Sigmoid colon (tissue), 7 donors: ENCODE measurements at regions of chr11 and their contacts with region 1.

Region 1: GRCh38 chr11:63762654-63763495 is 5.7 kb downstream of the ZFTA start:
- DNase-seq: peak; percentile 85
- H3K4me3 ChIP-seq: peak overlapping the region; percentile 52 to 65 (median 58)
- H3K27ac ChIP-seq: peak overlapping the region; percentile 86 to 94 (median 91)
- H3K4me1 ChIP-seq: peaks cover 0 to 61% (median 55%) of the 10 kb centered on the region in 4 donors
- H3K27me3 ChIP-seq: no peaks in the 10 kb centered on the region
- CTCF ChIP-seq: peak in 1 of 4 experiments; percentile 24
- EP300 ChIP-seq: no peak
- POLR2A ChIP-seq: no peak

Region 2: GRCh38 chr11:61885166-61885778 is 1877.6 kb before region 1 on chr11:
- intact Hi-C with region 1: no loop called
- DNase-seq: no peak
- H3K4me3 ChIP-seq: no peak overlapping the region
- H3K27ac ChIP-seq: no peak overlapping the region
- H3K4me1 ChIP-seq: peaks cover 0 to 32% (median 23%) of the 10 kb centered on the region in 4 donors
- H3K27me3 ChIP-seq: no peaks in the 10 kb centered on the region
- CTCF ChIP-seq: no peak
- EP300 ChIP-seq: no peak
- POLR2A ChIP-seq: no peak

Region 3: GRCh38 chr11:63671322-63672155 is 91.3 kb before region 1 on chr11 and contains the start of gene ATL3:
- intact Hi-C with region 1: loop called (anchors 5 kb)
- DNase-seq: peak; percentile 99
- H3K4me3 ChIP-seq: peak within 1 kb of the TSS; percentile 66 to 81 (median 74)
- H3K27ac ChIP-seq: peak within 1 kb of the TSS; percentile 96 to 98 (median 98)
- H3K4me1 ChIP-seq: peaks cover 0 to 42% (median 40%) of the 10 kb centered on the region in 4 donors
- H3K27me3 ChIP-seq: no peaks in the 10 kb centered on the region
- CTCF ChIP-seq: no peak
- EP300 ChIP-seq: no peak
- POLR2A ChIP-seq: no peak
- total RNA-seq, gene ATL3: 97.8 to 115 (median 102) TPM